CD4-positive, alpha-beta memory T cell (primary cell): ENCODE measurements at regions of chr15 and their contacts with region 1.

Region 1: GRCh38 chr15:90031231-90031791 is 30.2 kb downstream of the ZNF710 start:
- DNase-seq: peak in 3 of 5 donors; percentile 16 to 32 (median 25)
- H3K4me3 ChIP-seq: no peak overlapping the region
- H3K4me3 Mint-ChIP-seq: peak overlapping the region in 7 of 8 donors; percentile 39 to 80 (median 63)
- H3K27ac ChIP-seq: no peak overlapping the region
- H3K27ac Mint-ChIP-seq: peak overlapping the region; percentile 61 to 85 (median 76)
- H3K4me1 ChIP-seq: peaks cover 52% of the 10 kb centered on the region
- H3K4me1 Mint-ChIP-seq: peaks cover 33 to 59% (median 48%) of the 10 kb centered on the region in 4 donors
- H3K27me3 ChIP-seq: no peaks in the 10 kb centered on the region
- H3K27me3 Mint-ChIP-seq: no peaks in the 10 kb centered on the region

Region 2: DNA sequence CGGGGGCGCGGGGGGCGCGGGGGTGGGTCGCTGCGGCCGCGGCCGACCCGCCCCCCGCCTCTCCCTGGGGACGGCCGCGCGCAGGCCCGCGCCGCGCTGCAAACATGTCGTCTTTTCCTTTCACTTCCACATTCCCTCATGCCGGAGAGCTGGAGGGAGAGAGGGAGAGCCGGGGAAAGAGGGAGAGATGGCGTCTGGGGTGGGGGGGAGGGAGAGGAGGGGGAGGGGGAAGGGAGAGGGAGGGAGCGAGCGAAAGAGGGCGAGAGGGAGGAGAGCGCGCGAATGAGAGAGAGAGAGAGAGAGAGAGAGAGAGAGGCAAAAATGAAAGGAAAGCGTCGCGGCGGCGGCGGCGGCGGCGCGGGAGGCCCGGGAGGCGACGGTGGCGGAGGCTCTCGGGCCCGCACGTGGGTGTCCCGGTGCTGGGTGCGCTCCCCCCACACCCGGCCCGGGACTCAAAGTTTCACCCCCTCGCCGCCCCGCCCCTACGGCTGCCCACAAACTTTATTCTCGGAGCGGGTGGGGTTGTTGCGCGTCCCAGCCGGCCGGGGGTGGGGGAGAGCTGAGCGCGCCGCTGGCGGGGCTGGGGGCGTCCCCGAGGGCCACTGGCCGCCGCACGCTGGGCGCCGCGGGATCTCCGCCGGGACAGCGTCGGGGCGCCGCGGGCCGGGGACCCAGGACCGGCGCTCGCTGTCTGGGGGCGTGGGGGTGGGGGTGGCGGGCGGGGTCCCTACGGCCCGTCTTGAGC is 29.5 kb before region 1 on chr15:
- CTCF ChIA-PET with region 1: interaction called, 3 read pairs
- POLR2A ChIA-PET with region 1: interaction called, 13 read pairs
- intact Hi-C with region 1: no loop called
- DNase-seq: peak; percentile 71 to 76 (median 76)
- H3K4me3 ChIP-seq: peak overlapping the region in 1 of 2 donors; percentile 47
- H3K4me3 Mint-ChIP-seq: peak overlapping the region; percentile 82 to 96 (median 89)
- H3K27ac ChIP-seq: peak overlapping the region; percentile 61
- H3K27ac Mint-ChIP-seq: peak overlapping the region; percentile 86 to 98 (median 94)
- H3K4me1 ChIP-seq: peaks cover 66% of the 10 kb centered on the region
- H3K4me1 Mint-ChIP-seq: peaks cover 30 to 70% (median 53%) of the 10 kb centered on the region in 4 donors
- H3K27me3 ChIP-seq: no peaks in the 10 kb centered on the region
- H3K27me3 Mint-ChIP-seq: no peaks in the 10 kb centered on the region

Region 3: GRCh38 chr15:90013503-90013937 is 17.8 kb before region 1 on chr15:
- CTCF ChIA-PET with region 1: interaction called, 11 read pairs
- POLR2A ChIA-PET with region 1: interaction called, 19 read pairs
- intact Hi-C with region 1: loop called (anchors 2 kb)
- DNase-seq: peak; percentile 59 to 83 (median 77)
- H3K4me3 ChIP-seq: peak overlapping the region; percentile 12 to 27
- H3K4me3 Mint-ChIP-seq: peak overlapping the region; percentile 52 to 86 (median 80)
- H3K27ac ChIP-seq: no peak overlapping the region
- H3K27ac Mint-ChIP-seq: peak overlapping the region; percentile 7 to 90 (median 88)
- H3K4me1 ChIP-seq: peaks cover 72% of the 10 kb centered on the region
- H3K4me1 Mint-ChIP-seq: peaks cover 40 to 67% (median 51%) of the 10 kb centered on the region in 4 donors
- H3K27me3 ChIP-seq: no peaks in the 10 kb centered on the region
- H3K27me3 Mint-ChIP-seq: no peaks in the 10 kb centered on the region

Region 4: DNA sequence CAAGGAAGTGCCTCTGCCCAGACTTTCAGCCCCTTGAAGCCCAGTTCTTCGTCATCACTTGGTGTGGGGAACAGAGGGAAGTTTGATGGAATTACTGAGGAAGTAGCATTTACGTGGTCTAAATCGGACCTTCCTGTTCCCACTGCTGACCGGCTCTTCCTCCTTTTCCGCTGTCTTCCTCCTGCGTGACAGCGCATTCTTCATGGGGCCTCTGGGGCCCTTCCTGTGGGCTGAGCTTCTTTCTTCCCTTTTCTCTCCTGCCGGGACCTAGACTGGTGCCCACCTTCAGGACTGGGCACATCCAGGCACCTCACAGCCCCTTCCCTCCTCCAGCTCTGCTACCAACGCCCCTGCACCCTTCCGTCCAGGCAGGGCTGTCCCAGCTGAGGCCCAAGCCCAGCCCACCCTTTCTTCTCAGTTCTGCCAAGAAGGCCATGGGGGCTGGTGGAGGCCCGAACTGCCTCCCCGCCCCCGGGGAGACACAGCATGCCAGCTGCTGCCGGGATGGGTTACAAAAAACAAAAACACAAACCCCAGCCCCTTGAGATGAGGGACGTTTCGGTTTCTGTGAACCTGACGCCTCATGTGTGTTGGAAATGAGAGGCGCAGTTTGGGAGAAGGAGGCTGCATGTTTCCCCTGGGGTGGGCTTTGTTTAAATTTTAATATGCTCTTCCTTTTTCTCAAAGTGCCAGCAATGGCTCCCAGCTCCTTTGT is 11.1 kb before region 1 on chr15:
- CTCF ChIA-PET with region 1: interaction called, 11 read pairs
- POLR2A ChIA-PET with region 1: interaction called, 8 read pairs
- intact Hi-C with region 1: no loop called
- DNase-seq: no peak
- H3K4me3 ChIP-seq: no peak overlapping the region
- H3K4me3 Mint-ChIP-seq: no peak overlapping the region
- H3K27ac ChIP-seq: no peak overlapping the region
- H3K27ac Mint-ChIP-seq: peak overlapping the region in 1 of 7 donors; percentile 53
- H3K4me1 ChIP-seq: peaks cover 37% of the 10 kb centered on the region
- H3K4me1 Mint-ChIP-seq: peaks cover 23 to 64% (median 37%) of the 10 kb centered on the region in 4 donors
- H3K27me3 ChIP-seq: no peaks in the 10 kb centered on the region
- H3K27me3 Mint-ChIP-seq: no peaks in the 10 kb centered on the region

Region 5: DNA sequence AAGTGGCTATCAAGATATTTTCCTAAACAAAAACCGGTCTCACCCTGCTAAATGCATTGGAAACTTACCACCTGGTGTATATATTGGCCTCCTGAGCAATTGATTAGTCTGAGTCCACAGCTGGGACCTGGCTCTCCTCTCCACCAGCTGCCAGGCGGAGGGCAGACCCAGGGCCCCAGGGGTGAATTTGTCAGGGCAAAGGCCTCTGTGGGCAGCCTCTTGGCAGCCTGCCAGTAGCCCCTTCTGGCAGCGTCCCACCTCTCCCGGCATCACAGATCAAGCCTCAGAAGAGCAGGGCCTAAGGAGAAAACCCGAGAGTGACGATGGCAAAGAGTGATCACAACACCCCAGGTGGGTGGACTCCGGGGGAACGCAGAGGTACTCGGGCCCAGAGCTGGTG is 113.9 kb after region 1 on chr15:
- CTCF ChIA-PET with region 1: no interaction called
- POLR2A ChIA-PET with region 1: no interaction called
- intact Hi-C with region 1: no loop called
- DNase-seq: no peak
- H3K4me3 ChIP-seq: no peak overlapping the region
- H3K4me3 Mint-ChIP-seq: peak overlapping the region in 1 of 8 donors; percentile 20
- H3K27ac ChIP-seq: no peak overlapping the region
- H3K27ac Mint-ChIP-seq: peak overlapping the region in 1 of 7 donors; percentile 68
- H3K4me1 ChIP-seq: peaks cover 12% of the 10 kb centered on the region
- H3K4me1 Mint-ChIP-seq: peaks cover 7 to 27% (median 13%) of the 10 kb centered on the region in 4 donors
- H3K27me3 ChIP-seq: no peaks in the 10 kb centered on the region
- H3K27me3 Mint-ChIP-seq: no peaks in the 10 kb centered on the region

Region 6: GRCh38 chr15:90174140-90174875 is 143.0 kb after region 1 on chr15:
- CTCF ChIA-PET with region 1: no interaction called
- POLR2A ChIA-PET with region 1: no interaction called
- intact Hi-C with region 1: no loop called
- DNase-seq: no peak
- H3K4me3 ChIP-seq: no peak overlapping the region
- H3K4me3 Mint-ChIP-seq: no peak overlapping the region
- H3K27ac ChIP-seq: no peak overlapping the region
- H3K27ac Mint-ChIP-seq: no peak overlapping the region
- H3K4me1 ChIP-seq: peaks cover 10% of the 10 kb centered on the region
- H3K4me1 Mint-ChIP-seq: peaks cover 6 to 12% (median 10%) of the 10 kb centered on the region in 4 donors
- H3K27me3 ChIP-seq: no peaks in the 10 kb centered on the region
- H3K27me3 Mint-ChIP-seq: no peaks in the 10 kb centered on the region